ENCODE measurements at regions of chr1 and their contacts with region 1.

Region 1: DNA sequence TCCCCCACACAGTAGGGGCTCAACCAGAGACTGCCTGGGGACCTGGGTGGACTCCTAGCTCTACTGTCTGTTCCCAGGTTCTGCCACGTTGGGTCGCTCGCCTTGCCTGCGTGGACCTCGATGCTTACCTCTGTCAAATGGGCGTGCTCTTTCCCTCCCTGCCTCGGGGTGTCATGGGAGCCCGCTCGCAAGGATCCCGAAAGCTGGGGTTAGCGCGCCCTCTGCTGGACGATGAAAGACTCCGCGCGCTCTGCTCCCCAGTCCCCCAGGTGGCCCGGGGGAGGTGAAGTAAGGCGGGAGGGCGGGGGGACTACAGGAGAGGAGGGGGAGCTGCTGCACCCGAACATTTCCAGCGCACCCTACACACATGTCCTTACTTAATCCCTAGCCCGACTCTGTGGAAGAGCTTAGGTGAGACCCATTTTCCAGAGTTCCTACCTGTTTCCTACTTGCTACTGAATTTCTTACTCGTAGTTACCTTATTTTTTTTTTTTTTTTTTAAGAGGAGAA is 2.3 kb upstream of the BSND start:
- DNase-seq: no peak
- H3K4me3 ChIP-seq: no peak overlapping the region
- H3K27ac ChIP-seq: no peak overlapping the region
- H3K27me3 ChIP-seq: peaks cover 60% of the 10 kb centered on the region
- CTCF ChIP-seq: peak; percentile 75

Region 2: DNA sequence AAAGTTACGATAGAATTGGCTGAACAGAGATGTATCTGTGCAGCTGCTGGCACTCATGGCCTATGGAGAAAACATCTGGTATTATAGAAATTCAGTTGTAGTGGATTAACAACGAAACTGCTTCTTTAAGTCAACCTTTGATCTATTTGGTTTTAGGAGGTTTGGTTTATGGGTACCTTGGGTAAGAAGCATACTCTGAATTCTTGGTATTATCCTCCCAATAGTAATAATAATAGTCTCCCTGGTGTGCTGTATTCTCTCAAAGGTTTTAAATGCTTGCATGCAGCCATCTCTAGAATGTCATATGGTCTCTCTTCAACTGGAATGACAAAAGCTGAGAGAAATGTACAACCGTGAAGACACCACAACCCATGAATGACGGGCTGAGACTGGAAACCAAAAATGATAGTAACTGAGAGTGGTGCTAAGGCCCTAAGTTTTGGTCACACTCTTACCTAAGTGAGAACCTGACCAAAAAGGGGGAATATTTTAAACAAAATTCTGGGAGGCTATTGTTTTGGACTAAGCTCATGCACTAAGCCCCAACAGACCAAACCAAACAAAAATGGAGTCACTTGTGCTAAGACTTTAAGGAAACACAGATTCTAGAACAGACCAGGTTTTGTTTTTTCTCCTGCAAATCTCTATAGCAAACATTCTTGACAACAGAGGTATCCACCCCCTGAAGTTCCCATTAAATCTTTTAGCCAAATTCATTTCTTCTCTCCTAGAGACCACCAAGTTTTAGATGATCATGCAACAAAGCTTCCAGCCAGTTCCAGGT is 33.6 kb before region 1 on chr1:
- CTCF ChIA-PET with region 1: interaction called, 11 read pairs
- POLR2A ChIA-PET with region 1: no interaction called
- DNase-seq: no peak
- H3K4me3 ChIP-seq: no peak overlapping the region
- H3K27ac ChIP-seq: no peak overlapping the region
- H3K27me3 ChIP-seq: no peaks in the 10 kb centered on the region
- CTCF ChIP-seq: no peak

Region 3: GRCh38 chr1:54982739-54983138 is 13.7 kb before region 1 on chr1:
- CTCF ChIA-PET with region 1: interaction called, 20 read pairs
- POLR2A ChIA-PET with region 1: no interaction called
- DNase-seq: no peak
- H3K4me3 ChIP-seq: no peak overlapping the region
- H3K27ac ChIP-seq: no peak overlapping the region
- H3K27me3 ChIP-seq: peaks cover 59% of the 10 kb centered on the region
- CTCF ChIP-seq: no peak

Region 4: DNA sequence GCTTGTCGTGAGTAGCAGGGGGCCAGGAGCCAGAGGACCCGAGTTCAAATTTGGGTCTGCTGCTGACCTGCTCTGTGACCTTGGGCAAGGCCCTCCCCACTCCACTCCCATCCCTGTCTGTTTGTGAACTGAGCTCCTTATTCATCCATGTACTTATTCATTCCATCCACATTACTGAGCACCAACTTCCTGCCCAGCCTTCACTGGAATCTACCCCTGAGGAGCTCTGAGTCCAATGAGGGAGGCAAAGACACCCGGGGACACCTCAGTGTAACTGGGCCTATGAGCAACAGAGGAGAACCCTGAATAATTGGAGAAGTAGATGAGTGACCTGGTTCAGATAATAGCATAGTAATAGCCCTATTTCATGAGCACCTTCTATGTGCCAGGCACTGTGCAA is 11.2 kb after region 1 on chr1:
- CTCF ChIA-PET with region 1: interaction called, 21 read pairs
- POLR2A ChIA-PET with region 1: no interaction called
- DNase-seq: peak; percentile 13
- H3K4me3 ChIP-seq: no peak overlapping the region
- H3K27ac ChIP-seq: no peak overlapping the region
- H3K27me3 ChIP-seq: peaks cover 12% of the 10 kb centered on the region
- CTCF ChIP-seq: no peak

Region 5: GRCh38 chr1:55015731-55016620 is 19.6 kb after region 1 on chr1:
- CTCF ChIA-PET with region 1: interaction called, 12 read pairs
- POLR2A ChIA-PET with region 1: no interaction called
- DNase-seq: no peak
- H3K4me3 ChIP-seq: no peak overlapping the region
- H3K27ac ChIP-seq: no peak overlapping the region
- H3K27me3 ChIP-seq: peaks cover 66% of the 10 kb centered on the region
- CTCF ChIP-seq: no peak

Region 6: GRCh38 chr1:55215256-55216021 is 219.0 kb after region 1 on chr1 and contains the start of gene USP24:
- CTCF ChIA-PET with region 1: no interaction called
- POLR2A ChIA-PET with region 1: no interaction called
- DNase-seq: no peak
- H3K4me3 ChIP-seq: peak within 1 kb of the TSS; percentile 78
- H3K27ac ChIP-seq: peak within 1 kb of the TSS; percentile 77
- H3K27me3 ChIP-seq: no peaks in the 10 kb centered on the region
- CTCF ChIP-seq: no peak
- polyA plus RNA-seq, gene USP24: 18.3 and 20.9 TPM in 2 replicates